HCT116 (cell line): ENCODE measurements at regions of chr6 and their contacts with region 1.

Region 1: GRCh38 chr6:130843575-130844320 is 16.5 kb downstream of the SMLR1 start:
- DNase-seq: peak; percentile 28
- ATAC-seq: peak; percentile 90
- H3K4me3 ChIP-seq: no peak overlapping the region
- H3K27ac ChIP-seq: no peak overlapping the region
- H3K4me1 ChIP-seq: no peaks in the 10 kb centered on the region
- H3K27me3 ChIP-seq: no peaks in the 10 kb centered on the region
- CTCF ChIP-seq: peak; percentile 45 to 66 (median 46); a peak in 5 of 6 replicates
- POLR2A ChIP-seq: no peak
- RAD21 ChIP-seq: peak; percentile 73

Region 2: GRCh38 chr6:130037207-130037811 is 806.4 kb before region 1 on chr6:
- CTCF ChIA-PET with region 1: no interaction called
- POLR2A ChIA-PET with region 1: no interaction called
- RAD21 ChIA-PET with region 1: no interaction called
- intact Hi-C with region 1: loop called (anchors 5 kb)
- DNase-seq: no peak
- ATAC-seq: no peak
- H3K4me3 ChIP-seq: no peak overlapping the region
- H3K27ac ChIP-seq: no peak overlapping the region
- H3K4me1 ChIP-seq: peaks cover 23 to 26% of the 10 kb centered on the region in 2 experiments
- H3K27me3 ChIP-seq: no peaks in the 10 kb centered on the region
- CTCF ChIP-seq: peak; percentile 35 to 67 (median 39); a peak in 4 of 6 replicates
- POLR2A ChIP-seq: no peak
- RAD21 ChIP-seq: peak; percentile 37; the same call in 1 of the 2 replicates

Region 3: DNA sequence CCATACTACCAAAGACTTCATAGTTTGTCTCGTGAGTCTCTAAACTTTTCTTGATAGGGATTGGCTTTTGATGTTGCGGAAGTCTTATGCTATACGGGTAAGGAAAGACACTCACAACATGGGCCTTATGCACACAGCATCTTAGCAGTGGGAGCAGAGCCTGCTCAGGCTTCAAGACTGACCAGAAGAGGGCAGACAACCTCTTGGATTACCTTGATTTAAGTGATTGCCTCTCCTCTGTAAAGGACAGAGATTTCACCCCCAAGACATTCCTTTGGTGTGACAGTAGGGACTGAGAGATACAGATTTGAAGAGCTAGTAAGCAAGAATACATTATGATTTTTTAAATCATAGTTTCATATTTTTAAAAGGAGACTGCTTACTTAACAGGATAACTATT is 549.9 kb before region 1 on chr6:
- CTCF ChIA-PET with region 1: no interaction called
- POLR2A ChIA-PET with region 1: no interaction called
- RAD21 ChIA-PET with region 1: no interaction called
- intact Hi-C with region 1: loop called (anchors 5 kb)
- DNase-seq: peak; percentile 45
- ATAC-seq: peak; percentile 99
- H3K4me3 ChIP-seq: no peak overlapping the region
- H3K27ac ChIP-seq: no peak overlapping the region
- H3K4me1 ChIP-seq: no peaks in the 10 kb centered on the region
- H3K27me3 ChIP-seq: no peaks in the 10 kb centered on the region
- CTCF ChIP-seq: peak; percentile 58 to 72 (median 67); a peak in 5 of 6 replicates
- POLR2A ChIP-seq: no peak
- RAD21 ChIP-seq: peak; percentile 74

Region 4: GRCh38 chr6:130322673-130323268 is 521.0 kb before region 1 on chr6:
- CTCF ChIA-PET with region 1: no interaction called
- POLR2A ChIA-PET with region 1: no interaction called
- RAD21 ChIA-PET with region 1: no interaction called
- intact Hi-C with region 1: loop called (anchors 5 kb)
- DNase-seq: peak; percentile 48
- ATAC-seq: peak; percentile 77
- H3K4me3 ChIP-seq: no peak overlapping the region
- H3K27ac ChIP-seq: no peak overlapping the region; the same call in 1 of the 2 replicates
- H3K4me1 ChIP-seq: no peaks in the 10 kb centered on the region; a peak in 1 of 4 replicates
- H3K27me3 ChIP-seq: no peaks in the 10 kb centered on the region
- CTCF ChIP-seq: peak; percentile 83 to 95 (median 90)
- POLR2A ChIP-seq: no peak
- RAD21 ChIP-seq: peak; percentile 95

Region 5: GRCh38 chr6:130858498-130859160 is 14.9 kb after region 1 on chr6:
- CTCF ChIA-PET with region 1: no interaction called
- POLR2A ChIA-PET with region 1: no interaction called
- RAD21 ChIA-PET with region 1: no interaction called
- intact Hi-C with region 1: no loop called
- DNase-seq: no peak
- ATAC-seq: no peak
- H3K4me3 ChIP-seq: no peak overlapping the region
- H3K27ac ChIP-seq: no peak overlapping the region
- H3K4me1 ChIP-seq: no peaks in the 10 kb centered on the region
- H3K27me3 ChIP-seq: no peaks in the 10 kb centered on the region
- CTCF ChIP-seq: no peak
- POLR2A ChIP-seq: no peak
- RAD21 ChIP-seq: no peak

Region 6: DNA sequence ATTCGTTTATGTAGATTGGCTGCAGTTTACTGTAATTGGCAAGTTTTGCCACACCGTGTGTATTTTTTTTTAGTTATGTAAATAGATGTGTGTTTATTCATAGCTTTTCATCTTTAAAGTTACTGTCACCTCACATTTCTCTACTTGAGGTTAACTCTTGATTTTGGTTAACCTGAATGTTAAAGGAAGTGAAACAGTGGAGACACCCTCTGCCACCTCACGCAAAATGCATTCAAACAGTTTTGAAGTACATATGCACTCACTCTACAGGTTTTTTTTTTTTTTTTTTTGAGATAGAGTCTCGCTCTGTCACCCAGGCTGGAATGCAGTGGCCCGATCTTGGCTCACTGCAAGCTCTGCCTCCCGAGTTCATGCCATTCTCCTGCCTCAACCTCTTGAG is 839.7 kb after region 1 on chr6:
- CTCF ChIA-PET with region 1: no interaction called
- POLR2A ChIA-PET with region 1: no interaction called
- RAD21 ChIA-PET with region 1: no interaction called
- intact Hi-C with region 1: no loop called
- DNase-seq: no peak
- ATAC-seq: no peak
- H3K4me3 ChIP-seq: no peak overlapping the region
- H3K27ac ChIP-seq: no peak overlapping the region
- H3K4me1 ChIP-seq: no peaks in the 10 kb centered on the region
- H3K27me3 ChIP-seq: no peaks in the 10 kb centered on the region
- CTCF ChIP-seq: no peak
- POLR2A ChIP-seq: no peak
- RAD21 ChIP-seq: no peak